Dorsolateral prefrontal cortex (tissue), 120 donors: ENCODE measurements at regions of chr2 and their contacts with region 1.

Region 1: GRCh38 chr2:65443509-65444201 is 11.3 kb upstream of the SPRED2 start:
- DNase-seq: peak in 4 of 10 donors; percentile 47 to 56 (median 48)
- H3K4me3 ChIP-seq: no peak overlapping the region
- H3K27ac ChIP-seq: peak overlapping the region in 23 of 59 donors; percentile 1 to 69 (median 28)
- H3K27me3 ChIP-seq: no peaks in the 10 kb centered on the region
- CTCF ChIP-seq: no peak

Region 2: GRCh38 chr2:65361623-65362022 is 82.0 kb before region 1 on chr2:
- intact Hi-C with region 1: loop called in 1 of 2 experiments (anchors 5 kb)
- DNase-seq: peak in 1 of 10 donors; percentile 31
- H3K4me3 ChIP-seq: peak overlapping the region in 11 of 59 donors; percentile 1 to 28 (median 11)
- H3K27ac ChIP-seq: peak overlapping the region in 22 of 59 donors; percentile 0 to 55 (median 36)
- H3K27me3 ChIP-seq: no peaks in the 10 kb centered on the region
- CTCF ChIP-seq: no peak